ENCODE measurements at regions of chr14 and their contacts with region 1.

Region 1: DNA sequence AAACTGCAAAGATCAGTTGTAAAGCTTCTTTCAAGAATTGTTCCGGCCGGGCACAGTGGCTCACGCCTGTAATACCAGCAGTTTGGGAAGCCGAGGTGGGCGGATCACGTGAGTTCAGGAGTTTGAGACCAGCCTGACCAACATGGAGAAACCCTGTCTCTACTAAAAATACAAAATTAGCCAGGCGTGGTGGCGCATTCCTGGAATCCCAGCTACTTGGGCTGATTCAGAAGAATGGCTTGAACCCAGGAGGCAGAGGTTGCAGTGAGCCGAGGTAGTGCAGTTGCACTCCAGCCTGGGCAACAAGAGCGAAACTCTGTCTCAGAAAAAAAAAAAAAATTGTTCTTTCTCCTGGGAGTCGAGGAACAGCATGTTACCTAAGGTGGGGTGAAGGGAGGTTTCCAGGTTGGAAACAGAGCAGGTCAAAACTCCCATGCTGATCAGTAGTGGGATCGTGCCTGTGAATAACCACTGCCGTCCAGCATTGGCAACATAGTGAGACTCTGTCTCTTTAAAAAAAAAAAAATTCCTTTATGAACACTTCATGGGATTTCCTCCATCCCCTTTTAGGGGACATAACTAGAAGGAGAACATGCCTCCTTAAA is 13.9 kb downstream of the FBXO34 start:
- DNase-seq: no peak
- ATAC-seq: no peak
- H3K4me3 ChIP-seq: no peak overlapping the region
- H3K27ac ChIP-seq: no peak overlapping the region
- H3K4me1 ChIP-seq: no peaks in the 10 kb centered on the region; the same call in 1 of the 2 replicates
- H3K27me3 ChIP-seq: no peaks in the 10 kb centered on the region
- CTCF ChIP-seq: no peak
- POLR2A ChIP-seq: no peak
- RAD21 ChIP-seq: no peak

Region 2: DNA sequence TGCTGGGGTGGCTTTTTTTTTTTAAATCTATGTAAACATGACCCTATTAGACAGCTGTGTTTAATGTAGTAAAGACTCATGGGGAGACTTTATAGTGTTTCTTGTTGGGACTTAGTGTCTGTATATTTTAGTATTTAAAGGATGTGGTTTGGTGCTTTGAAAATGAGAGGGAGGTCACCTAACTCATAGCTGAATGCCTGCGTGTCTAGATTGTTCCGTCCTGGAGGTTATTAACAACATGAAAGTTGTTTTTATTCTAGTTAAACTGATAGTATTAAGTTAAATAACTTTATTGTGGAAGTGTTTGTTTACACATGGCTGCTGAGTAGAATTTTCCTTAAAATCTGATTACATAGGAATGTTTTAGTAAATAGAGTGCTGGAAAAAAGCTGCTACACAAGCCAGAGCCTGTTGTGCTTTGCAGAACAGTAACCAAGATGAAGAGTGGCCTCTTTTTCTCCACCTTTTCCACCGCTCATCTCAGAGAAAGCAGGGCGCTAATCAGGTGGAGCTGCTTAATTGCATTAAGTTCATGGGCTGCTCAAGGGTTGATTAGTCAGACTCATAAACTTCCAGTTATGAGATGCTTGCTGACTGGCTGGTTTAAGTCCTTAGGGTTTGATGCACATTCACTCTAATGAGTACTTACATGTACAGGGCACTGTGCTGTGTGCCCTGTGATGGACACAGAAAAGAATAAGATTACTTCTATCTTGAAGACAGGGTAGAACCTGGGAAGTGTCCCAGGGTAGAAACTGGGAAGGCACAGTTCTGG is 48.7 kb after region 1 on chr14:
- CTCF ChIA-PET with region 1: interaction called, 5 read pairs
- POLR2A ChIA-PET with region 1: interaction called, 3 read pairs
- dilution Hi-C with region 1: no loop called
- in situ Hi-C with region 1: no loop called
- intact Hi-C with region 1: loop called (anchors 5 kb)
- DNase-seq: peak; percentile 81
- ATAC-seq: peak; percentile 93
- H3K4me3 ChIP-seq: no peak overlapping the region
- H3K27ac ChIP-seq: peak overlapping the region; percentile 52; the same call in 1 of the 2 replicates
- H3K4me1 ChIP-seq: peaks cover 12% of the 10 kb centered on the region
- H3K27me3 ChIP-seq: no peaks in the 10 kb centered on the region
- CTCF ChIP-seq: no peak
- POLR2A ChIP-seq: no peak
- RAD21 ChIP-seq: no peak